Activated CD4-positive, alpha-beta memory T cell treated with anti-CD3 and anti-CD28 coated beads, Interleukin-2, amount 10 ng/mL, durations not matched to agents 7 days and 5 days (primary cell): ENCODE measurements at regions of chr3 and their contacts with region 1.

Region 1: DNA sequence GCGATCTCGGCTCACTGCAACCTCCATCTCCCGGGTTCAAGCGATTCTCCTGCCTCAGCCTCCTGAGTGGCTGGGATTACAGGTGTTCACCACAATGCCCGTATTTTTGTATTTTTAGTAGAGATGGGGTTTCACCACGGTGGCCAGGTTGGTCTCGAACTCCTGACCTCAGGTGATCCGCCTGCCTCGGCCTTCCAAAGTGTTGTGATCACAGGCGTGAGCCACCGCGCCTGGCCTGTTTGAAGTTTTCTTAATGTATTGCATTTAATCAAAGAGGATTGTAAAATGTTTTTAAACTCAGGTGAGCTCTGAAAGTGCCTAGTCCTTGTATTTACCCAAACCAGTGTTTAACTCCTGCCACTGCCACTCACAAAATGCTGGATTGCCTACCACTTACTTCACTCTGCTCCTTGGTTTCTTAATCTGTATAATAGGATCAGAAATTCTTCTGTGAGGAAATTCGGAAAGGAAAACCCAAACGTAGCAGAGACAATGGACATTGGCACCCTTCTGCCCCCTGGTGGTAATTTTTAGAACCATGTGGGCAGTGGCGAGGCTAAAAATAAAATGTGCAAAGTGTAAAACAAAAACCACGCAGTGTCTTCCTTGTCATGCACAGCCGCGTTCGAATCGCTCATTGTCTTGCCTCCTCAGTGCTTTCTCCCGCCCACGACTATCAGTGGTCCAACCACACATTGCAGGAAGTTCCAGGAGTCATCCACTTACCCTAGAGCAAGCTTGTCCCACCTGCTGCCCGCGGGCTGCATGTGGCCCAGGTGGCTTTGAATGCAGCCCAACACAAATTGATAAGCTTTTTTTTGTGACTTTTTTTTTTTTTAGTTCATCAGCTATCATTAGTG is 27.3 kb downstream of the CEP19 start:
- DNase-seq: peak; percentile 71
- H3K4me3 Mint-ChIP-seq: peak overlapping the region; percentile 52
- H3K27ac Mint-ChIP-seq: peak overlapping the region; percentile 63
- H3K4me1 Mint-ChIP-seq: peaks cover 33% of the 10 kb centered on the region
- H3K27me3 Mint-ChIP-seq: no peaks in the 10 kb centered on the region

Region 2: GRCh38 chr3:196632046-196632751 is 52.6 kb before region 1 on chr3:
- CTCF ChIA-PET with region 1: interaction called, 11 read pairs
- POLR2A ChIA-PET with region 1: interaction called, 7 read pairs
- DNase-seq: peak; percentile 97
- H3K4me3 Mint-ChIP-seq: peak overlapping the region; percentile 97
- H3K27ac Mint-ChIP-seq: peak overlapping the region; percentile 98
- H3K4me1 Mint-ChIP-seq: peaks cover 65% of the 10 kb centered on the region
- H3K27me3 Mint-ChIP-seq: no peaks in the 10 kb centered on the region

Region 3: DNA sequence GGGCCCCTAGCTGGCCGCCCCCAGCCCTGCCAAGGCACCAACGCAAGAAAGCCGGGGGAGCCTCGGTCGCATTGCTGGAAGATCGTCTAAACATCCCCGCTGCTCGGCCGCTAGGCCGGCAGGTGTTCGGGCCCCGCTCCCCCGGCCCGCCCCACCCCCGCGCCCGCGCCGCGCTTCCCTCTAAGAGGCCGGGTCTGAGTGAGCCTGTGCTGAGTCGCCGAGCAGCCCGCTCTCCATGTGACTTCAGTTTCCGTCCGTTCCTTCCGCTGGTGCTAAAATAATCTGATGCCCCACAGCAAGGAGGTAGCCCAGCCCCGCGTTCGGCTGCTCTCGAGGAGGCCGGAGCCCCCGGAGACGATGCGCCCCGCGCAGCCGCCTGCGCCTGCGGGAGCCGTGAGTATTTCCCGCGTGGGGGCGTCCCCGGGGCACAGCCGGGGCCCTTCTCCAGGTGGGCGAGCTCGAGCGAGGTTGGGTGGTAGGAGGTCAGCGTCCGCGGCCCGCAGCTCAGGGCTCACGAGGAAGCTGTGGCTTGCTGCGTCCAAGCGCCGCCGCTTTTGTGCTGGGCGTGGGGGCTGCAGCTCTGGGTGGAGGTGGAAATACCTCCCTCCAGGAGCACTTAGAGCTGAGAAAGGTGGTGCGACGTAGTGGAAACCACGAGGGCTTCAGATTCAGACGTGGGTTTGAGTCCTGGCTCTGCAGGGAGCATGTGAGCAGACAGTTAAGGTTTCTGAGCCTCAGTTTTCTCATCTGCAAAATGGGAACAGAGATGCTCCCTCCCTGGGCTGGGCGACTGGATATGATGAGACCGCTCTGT is 45.1 kb before region 1 on chr3 and contains the start of gene NRROS:
- CTCF ChIA-PET with region 1: interaction called, 16 read pairs
- POLR2A ChIA-PET with region 1: interaction called, 8 read pairs
- DNase-seq: peak; percentile 82
- H3K4me3 Mint-ChIP-seq: peak within 1 kb of the TSS; percentile 73
- H3K27ac Mint-ChIP-seq: peak within 1 kb of the TSS; percentile 86
- H3K4me1 Mint-ChIP-seq: peaks cover 65% of the 10 kb centered on the region
- H3K27me3 Mint-ChIP-seq: no peaks in the 10 kb centered on the region
- total RNA-seq, gene NRROS: 50.1 to 52.8 TPM

Region 4: GRCh38 chr3:196670339-196670738 is 14.4 kb before region 1 on chr3:
- CTCF ChIA-PET with region 1: interaction called, 16 read pairs
- POLR2A ChIA-PET with region 1: no interaction called
- DNase-seq: peak; percentile 21
- H3K4me3 Mint-ChIP-seq: peak overlapping the region; percentile 56
- H3K27ac Mint-ChIP-seq: peak overlapping the region; percentile 76
- H3K4me1 Mint-ChIP-seq: peaks cover 30% of the 10 kb centered on the region
- H3K27me3 Mint-ChIP-seq: no peaks in the 10 kb centered on the region

Region 5: GRCh38 chr3:196763179-196763822 is 78.5 kb after region 1 on chr3:
- CTCF ChIA-PET with region 1: no interaction called
- POLR2A ChIA-PET with region 1: no interaction called
- DNase-seq: no peak
- H3K4me3 Mint-ChIP-seq: no peak overlapping the region
- H3K27ac Mint-ChIP-seq: no peak overlapping the region
- H3K4me1 Mint-ChIP-seq: peaks cover 11% of the 10 kb centered on the region
- H3K27me3 Mint-ChIP-seq: no peaks in the 10 kb centered on the region